GM18951 (cell line): ENCODE measurements at regions of chr13 and their contacts with region 1.

Region 1: DNA sequence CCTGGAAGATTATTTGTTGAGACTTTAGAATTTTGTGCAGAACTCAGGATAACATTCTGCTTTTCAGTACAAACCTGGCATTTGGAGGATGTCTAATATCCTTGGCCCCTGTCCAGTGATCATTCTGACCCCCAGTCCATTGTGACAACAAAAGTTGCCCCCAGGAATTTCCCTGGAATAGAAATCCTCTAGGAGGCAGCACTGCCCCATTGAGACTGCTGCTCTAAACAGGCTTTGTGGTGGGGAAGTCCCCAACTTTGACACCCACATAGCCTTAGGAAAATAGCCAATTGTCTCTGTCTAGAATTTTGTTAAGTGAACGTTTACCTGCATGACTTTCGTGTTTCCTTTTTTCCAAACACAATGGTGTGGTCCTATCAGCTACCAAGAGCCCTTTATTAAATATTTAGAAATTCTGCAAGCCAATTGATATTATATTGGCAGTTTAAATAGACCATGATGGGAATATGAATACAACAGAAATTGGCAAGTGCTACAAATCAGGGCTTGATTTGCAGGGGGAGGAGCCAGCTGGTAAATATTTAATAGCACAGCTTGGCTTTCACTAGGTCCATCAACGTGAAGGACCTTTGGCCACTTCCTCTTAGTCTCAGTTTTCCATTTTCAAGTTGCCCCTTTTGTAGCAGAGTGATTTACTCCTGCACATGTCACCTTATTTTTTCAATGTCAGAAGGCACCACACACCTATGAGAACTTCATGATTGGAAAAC is 451.7 kb downstream of the EFNB2 start:
- POLR2A ChIP-seq: no peak

Region 2: DNA sequence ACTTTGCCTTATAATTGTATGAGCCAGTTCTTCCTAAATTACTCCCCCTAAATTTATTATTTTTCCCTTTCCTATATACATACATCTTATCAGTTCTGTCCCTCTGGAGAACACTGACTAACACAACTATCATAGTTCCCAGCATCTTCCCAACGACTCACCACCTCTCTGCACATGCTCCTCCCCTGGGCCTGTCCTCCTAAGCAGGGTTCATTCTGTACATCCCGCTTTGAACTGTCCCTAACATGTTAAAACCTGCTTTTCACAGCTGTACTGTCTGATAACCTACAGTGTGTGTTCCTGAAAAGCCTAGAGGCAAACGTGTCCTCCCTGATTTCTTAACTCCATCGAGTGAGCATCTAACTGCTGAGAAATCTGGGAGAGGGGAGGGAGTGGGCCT is 310.0 kb after region 1 on chr13:
- in situ Hi-C with region 1: no loop called
- POLR2A ChIP-seq: no peak

Region 3: GRCh38 chr13:106536244-106537034 is 452.7 kb after region 1 on chr13:
- in situ Hi-C with region 1: loop called (anchors 25 kb)
- POLR2A ChIP-seq: no peak